GM12878 (cell line): ENCODE measurements at regions of chr3 and their contacts with region 1.

Region 1: GRCh38 chr3:59540696-59541095 is 490.9 kb upstream of the CFAP20DC start:
- DNase-seq: peak; percentile 60
- ATAC-seq: peak; percentile 97
- H3K4me3 ChIP-seq: no peak overlapping the region
- H3K27ac ChIP-seq: no peak overlapping the region
- H3K4me1 ChIP-seq: no peaks in the 10 kb centered on the region
- H3K27me3 ChIP-seq: no peaks in the 10 kb centered on the region
- CTCF ChIP-seq: no peak
- EP300 ChIP-seq: peak; percentile 51 to 65; a peak in 2 of 4 replicates
- POLR2A ChIP-seq: no peak
- RAD21 ChIP-seq: no peak

Region 2: GRCh38 chr3:59143447-59143846 is 397.2 kb before region 1 on chr3:
- CTCF ChIA-PET with region 1: no interaction called
- POLR2A ChIA-PET with region 1: no interaction called
- RAD21 ChIA-PET with region 1: no interaction called
- SMC1A ChIA-PET with region 1: no interaction called
- in situ Hi-C with region 1: no loop called
- intact Hi-C with region 1: no loop called
- DNase-seq: no peak
- ATAC-seq: peak; percentile 21; the same call in 1 of the 3 replicates
- H3K4me3 ChIP-seq: no peak overlapping the region
- H3K27ac ChIP-seq: no peak overlapping the region
- H3K4me1 ChIP-seq: no peaks in the 10 kb centered on the region
- H3K27me3 ChIP-seq: no peaks in the 10 kb centered on the region; a peak in 1 of 4 replicates
- CTCF ChIP-seq: 0 out of 6 replicates have a peak, but pooled peaks of 1 of the 3 experiments have one; percentile 6
- EP300 ChIP-seq: no peak
- POLR2A ChIP-seq: no peak
- RAD21 ChIP-seq: no peak

Region 3: DNA sequence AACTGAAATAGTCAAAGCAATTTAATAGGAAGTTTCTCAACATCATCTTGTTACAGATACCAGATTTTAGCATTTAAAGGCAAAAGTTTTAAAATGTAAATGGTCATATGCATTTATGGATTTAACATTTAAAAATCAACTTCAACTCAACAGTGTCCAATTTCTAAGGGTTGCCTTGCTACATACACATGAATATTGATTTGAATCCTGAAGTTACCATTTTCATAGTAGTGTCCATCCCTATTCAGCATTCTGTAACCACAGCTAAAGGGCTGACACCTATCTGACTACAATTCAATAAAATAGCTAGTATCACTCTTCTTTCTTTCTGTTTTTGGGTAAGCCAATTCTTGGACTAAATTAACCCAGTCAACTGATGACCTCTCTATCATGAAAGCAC is 326.8 kb before region 1 on chr3:
- CTCF ChIA-PET with region 1: no interaction called
- POLR2A ChIA-PET with region 1: no interaction called
- RAD21 ChIA-PET with region 1: no interaction called
- SMC1A ChIA-PET with region 1: no interaction called
- in situ Hi-C with region 1: no loop called
- intact Hi-C with region 1: no loop called
- DNase-seq: no peak
- ATAC-seq: no peak
- H3K4me3 ChIP-seq: no peak overlapping the region
- H3K27ac ChIP-seq: no peak overlapping the region
- H3K4me1 ChIP-seq: no peaks in the 10 kb centered on the region
- H3K27me3 ChIP-seq: no peaks in the 10 kb centered on the region
- CTCF ChIP-seq: no peak
- EP300 ChIP-seq: no peak
- POLR2A ChIP-seq: no peak
- RAD21 ChIP-seq: no peak

Region 4: GRCh38 chr3:59392116-59392515 is 148.6 kb before region 1 on chr3:
- CTCF ChIA-PET with region 1: no interaction called
- POLR2A ChIA-PET with region 1: no interaction called
- RAD21 ChIA-PET with region 1: interaction called, 6 read pairs
- SMC1A ChIA-PET with region 1: interaction called, 3 read pairs
- in situ Hi-C with region 1: no loop called
- intact Hi-C with region 1: loop called (anchors 2 kb)
- DNase-seq: no peak
- ATAC-seq: no peak
- H3K4me3 ChIP-seq: no peak overlapping the region
- H3K27ac ChIP-seq: no peak overlapping the region
- H3K4me1 ChIP-seq: peaks cover 19% of the 10 kb centered on the region
- H3K27me3 ChIP-seq: no peaks in the 10 kb centered on the region
- CTCF ChIP-seq: no peak
- EP300 ChIP-seq: no peak
- POLR2A ChIP-seq: no peak
- RAD21 ChIP-seq: no peak

Region 5: DNA sequence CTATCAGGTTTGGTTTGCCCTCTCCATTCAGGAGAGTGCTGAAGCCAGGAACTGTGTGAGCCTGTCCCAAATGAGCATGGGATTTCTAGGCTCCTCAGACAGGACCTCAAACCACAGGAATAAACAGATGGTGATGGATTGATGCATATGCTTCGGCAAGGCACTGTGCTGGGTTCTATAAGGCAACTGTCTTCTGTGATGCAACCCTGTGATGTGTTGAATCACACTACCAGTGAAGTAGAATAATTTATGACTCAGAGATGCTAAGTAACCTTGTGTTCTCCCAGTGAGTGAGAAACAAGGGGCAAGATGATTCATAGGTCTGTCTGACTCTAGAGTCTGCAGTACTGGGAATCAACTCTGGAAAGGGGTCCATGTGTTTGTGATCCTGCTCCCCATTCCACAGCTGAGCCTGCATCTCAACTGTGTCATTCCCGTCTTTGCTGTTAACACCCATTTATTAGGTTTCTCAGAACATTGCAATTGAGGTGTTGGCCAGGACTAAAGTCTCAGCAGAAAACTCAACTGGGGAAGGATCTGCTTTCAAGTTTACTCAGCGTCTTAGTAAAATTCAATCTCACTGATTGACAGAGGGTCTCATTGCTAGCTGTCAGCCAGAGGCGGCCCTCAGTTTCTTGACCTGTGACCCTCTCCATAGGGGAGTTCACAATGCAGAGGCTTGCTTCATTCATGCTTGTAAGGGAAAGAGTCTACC is 19.2 kb after region 1 on chr3:
- CTCF ChIA-PET with region 1: interaction called, 13 read pairs
- POLR2A ChIA-PET with region 1: interaction called, 3 read pairs
- RAD21 ChIA-PET with region 1: interaction called, 4 read pairs
- SMC1A ChIA-PET with region 1: interaction called, 54 read pairs
- in situ Hi-C with region 1: no loop called
- intact Hi-C with region 1: no loop called
- DNase-seq: no peak
- ATAC-seq: no peak
- H3K4me3 ChIP-seq: no peak overlapping the region
- H3K27ac ChIP-seq: no peak overlapping the region
- H3K4me1 ChIP-seq: no peaks in the 10 kb centered on the region
- H3K27me3 ChIP-seq: no peaks in the 10 kb centered on the region; a peak in 1 of 4 replicates
- CTCF ChIP-seq: no peak
- EP300 ChIP-seq: no peak
- POLR2A ChIP-seq: no peak
- RAD21 ChIP-seq: no peak

Region 6: DNA sequence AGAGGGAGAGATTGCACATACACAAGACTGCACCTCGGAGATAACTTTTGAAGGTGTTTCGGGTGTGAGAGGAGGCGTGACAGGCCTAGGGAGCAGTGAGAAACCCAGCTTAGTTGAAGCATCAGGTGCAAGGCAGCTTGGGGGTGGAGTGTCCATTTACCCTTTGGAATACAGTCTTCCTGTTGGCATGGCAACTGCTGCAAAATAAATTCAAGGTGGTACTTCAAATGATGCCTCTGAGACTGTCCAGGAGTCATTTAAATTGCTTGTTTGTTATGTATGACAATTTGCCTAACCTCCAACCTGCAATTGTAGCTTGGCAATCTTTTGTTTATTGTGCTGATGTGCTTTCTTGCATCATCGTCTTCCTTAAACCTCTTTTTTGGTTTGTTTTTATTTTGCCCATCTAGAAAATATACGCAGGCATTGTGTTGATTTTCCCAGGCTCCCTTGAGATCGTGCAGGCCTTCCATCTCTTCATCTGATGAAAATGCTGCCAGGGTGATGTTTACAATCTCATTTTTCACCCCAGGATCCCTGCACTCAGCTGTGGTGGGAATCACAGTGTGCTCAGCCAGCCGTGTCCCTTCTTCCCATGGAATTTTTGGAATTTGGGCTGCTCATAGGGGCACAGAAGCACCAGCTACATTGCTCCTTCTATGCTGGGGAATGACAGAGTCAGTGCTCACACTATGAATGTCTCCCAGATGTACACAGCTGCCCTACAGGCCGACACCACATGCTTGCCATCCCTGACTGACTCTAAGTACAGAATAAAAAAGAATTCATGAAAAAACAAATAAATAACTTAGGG is 92.3 kb after region 1 on chr3:
- CTCF ChIA-PET with region 1: no interaction called
- POLR2A ChIA-PET with region 1: no interaction called
- RAD21 ChIA-PET with region 1: no interaction called
- SMC1A ChIA-PET with region 1: no interaction called
- in situ Hi-C with region 1: no loop called
- intact Hi-C with region 1: no loop called
- DNase-seq: no peak
- ATAC-seq: no peak
- H3K4me3 ChIP-seq: no peak overlapping the region
- H3K27ac ChIP-seq: no peak overlapping the region
- H3K4me1 ChIP-seq: no peaks in the 10 kb centered on the region
- H3K27me3 ChIP-seq: no peaks in the 10 kb centered on the region
- CTCF ChIP-seq: no peak
- EP300 ChIP-seq: no peak
- POLR2A ChIP-seq: no peak
- RAD21 ChIP-seq: no peak